HEK293 (cell line): ENCODE measurements at regions of chr5 and their contacts with region 1.

Region 1: GRCh38 chr5:147935032-147935431 is 28.7 kb upstream of the C5orf46 start:
- H3K4me3 ChIP-seq: no peak overlapping the region
- H3K27ac ChIP-seq: no peak overlapping the region
- H3K4me1 ChIP-seq: no peaks in the 10 kb centered on the region
- CTCF ChIP-seq: peak; percentile 39; the same call in 1 of the 2 replicates

Region 2: GRCh38 chr5:147857302-147858129 is 77.5 kb before region 1 on chr5:
- CTCF ChIA-PET with region 1: interaction called, 172 read pairs
- POLR2A ChIA-PET with region 1: no interaction called
- H3K4me3 ChIP-seq: no peak overlapping the region
- H3K27ac ChIP-seq: no peak overlapping the region
- H3K4me1 ChIP-seq: no peaks in the 10 kb centered on the region
- CTCF ChIP-seq: no peak

Region 3: DNA sequence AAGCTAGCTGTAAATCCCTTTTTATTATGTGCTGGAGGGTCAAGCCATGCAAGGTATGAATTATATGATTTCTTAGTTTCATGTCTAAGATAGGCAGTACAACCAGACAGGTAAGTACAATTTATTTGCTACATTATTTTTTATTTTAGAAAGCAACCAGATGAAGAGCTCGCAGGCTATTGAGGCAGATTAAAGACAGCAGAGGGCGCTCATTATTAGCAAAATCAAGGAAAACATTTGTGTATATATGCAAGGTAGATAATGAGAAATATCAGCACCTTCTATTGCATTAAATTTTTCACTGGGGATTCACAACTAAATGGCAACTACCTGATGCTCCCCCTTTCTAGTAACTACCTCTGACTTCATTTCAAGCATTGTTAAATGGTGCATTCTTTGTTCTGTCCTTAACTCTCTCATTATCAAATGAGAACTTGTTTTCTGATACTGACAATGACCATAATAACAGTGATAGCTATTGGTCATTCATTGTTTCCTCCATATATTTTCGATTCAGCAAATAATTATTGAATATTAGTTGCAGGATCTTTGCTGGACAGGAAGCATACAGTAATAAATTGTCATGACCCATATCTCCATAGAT is 47.9 kb before region 1 on chr5:
- CTCF ChIA-PET with region 1: interaction called, 79 read pairs
- POLR2A ChIA-PET with region 1: no interaction called
- H3K4me3 ChIP-seq: no peak overlapping the region
- H3K27ac ChIP-seq: no peak overlapping the region
- H3K4me1 ChIP-seq: no peaks in the 10 kb centered on the region
- CTCF ChIP-seq: no peak

Region 4: GRCh38 chr5:147925020-147925419 is 10.0 kb before region 1 on chr5:
- CTCF ChIA-PET with region 1: interaction called, 13 read pairs
- POLR2A ChIA-PET with region 1: no interaction called
- H3K4me3 ChIP-seq: no peak overlapping the region
- H3K27ac ChIP-seq: no peak overlapping the region
- H3K4me1 ChIP-seq: no peaks in the 10 kb centered on the region
- CTCF ChIP-seq: no peak